SK-N-SH (cell line): ENCODE measurements at regions of chr1 and their contacts with region 1.

Region 1: GRCh38 chr1:234610348-234611152 is 572 bp upstream of the IRF2BP2 start:
- DNase-seq: peak; percentile 92
- H3K4me3 ChIP-seq: peak overlapping the region; percentile 69 to 83
- H3K27ac ChIP-seq: peak overlapping the region; percentile 100
- H3K4me1 ChIP-seq: peaks cover 34 to 46% of the 10 kb centered on the region in 2 experiments
- H3K27me3 ChIP-seq: no peaks in the 10 kb centered on the region
- CTCF ChIP-seq: no peak
- EP300 ChIP-seq: peak in 1 of 2 experiments; percentile 52; a peak in 2 of 4 replicates
- RAD21 ChIP-seq: no peak

Region 2: DNA sequence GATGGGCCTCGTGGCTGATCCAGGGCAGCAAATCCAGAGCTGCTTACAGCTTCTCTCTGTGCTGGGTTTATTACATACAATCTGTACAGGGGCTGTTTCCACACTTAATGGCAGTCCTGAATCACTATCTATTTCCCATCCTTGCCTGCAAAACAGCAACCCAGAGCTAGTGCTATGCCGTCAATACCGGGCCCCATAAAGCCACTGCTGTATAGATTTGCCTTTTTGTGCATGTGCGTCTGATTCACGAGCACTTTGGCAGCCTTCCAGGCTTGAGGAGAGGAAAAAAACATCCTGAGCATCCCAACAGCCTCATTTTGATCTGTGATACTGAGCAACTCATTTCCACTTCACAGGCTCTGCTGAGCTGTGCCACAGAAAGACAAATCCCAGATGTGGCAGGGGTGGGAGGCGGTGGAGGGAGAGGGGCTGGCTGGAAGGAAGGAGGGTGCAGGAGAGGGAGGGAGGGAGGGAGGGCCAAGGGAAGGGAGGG is 66.4 kb before region 1 on chr1:
- CTCF ChIA-PET with region 1: interaction called, 22 read pairs
- POLR2A ChIA-PET with region 1: interaction called, 30 read pairs
- DNase-seq: peak; percentile 86
- H3K4me3 ChIP-seq: no peak overlapping the region; a peak in 1 of 4 replicates
- H3K27ac ChIP-seq: peak overlapping the region; percentile 92 to 100
- H3K4me1 ChIP-seq: peaks cover 23 to 67% of the 10 kb centered on the region in 2 experiments
- H3K27me3 ChIP-seq: no peaks in the 10 kb centered on the region
- CTCF ChIP-seq: no peak
- EP300 ChIP-seq: peak; percentile 88 to 94
- RAD21 ChIP-seq: peak; percentile 30; the same call in 1 of the 2 replicates

Region 3: GRCh38 chr1:234656856-234657654 is 46.5 kb after region 1 on chr1:
- CTCF ChIA-PET with region 1: interaction called, 3 read pairs
- POLR2A ChIA-PET with region 1: interaction called, 13 read pairs
- DNase-seq: peak; percentile 39
- H3K4me3 ChIP-seq: no peak overlapping the region
- H3K27ac ChIP-seq: peak overlapping the region in 1 of 2 experiments; percentile 79; a peak in 3 of 4 replicates
- H3K4me1 ChIP-seq: peaks cover 27 to 35% of the 10 kb centered on the region in 2 experiments
- H3K27me3 ChIP-seq: no peaks in the 10 kb centered on the region
- CTCF ChIP-seq: no peak
- EP300 ChIP-seq: peak; percentile 4 to 85; a peak in 2 of 4 replicates
- RAD21 ChIP-seq: no peak

Region 4: DNA sequence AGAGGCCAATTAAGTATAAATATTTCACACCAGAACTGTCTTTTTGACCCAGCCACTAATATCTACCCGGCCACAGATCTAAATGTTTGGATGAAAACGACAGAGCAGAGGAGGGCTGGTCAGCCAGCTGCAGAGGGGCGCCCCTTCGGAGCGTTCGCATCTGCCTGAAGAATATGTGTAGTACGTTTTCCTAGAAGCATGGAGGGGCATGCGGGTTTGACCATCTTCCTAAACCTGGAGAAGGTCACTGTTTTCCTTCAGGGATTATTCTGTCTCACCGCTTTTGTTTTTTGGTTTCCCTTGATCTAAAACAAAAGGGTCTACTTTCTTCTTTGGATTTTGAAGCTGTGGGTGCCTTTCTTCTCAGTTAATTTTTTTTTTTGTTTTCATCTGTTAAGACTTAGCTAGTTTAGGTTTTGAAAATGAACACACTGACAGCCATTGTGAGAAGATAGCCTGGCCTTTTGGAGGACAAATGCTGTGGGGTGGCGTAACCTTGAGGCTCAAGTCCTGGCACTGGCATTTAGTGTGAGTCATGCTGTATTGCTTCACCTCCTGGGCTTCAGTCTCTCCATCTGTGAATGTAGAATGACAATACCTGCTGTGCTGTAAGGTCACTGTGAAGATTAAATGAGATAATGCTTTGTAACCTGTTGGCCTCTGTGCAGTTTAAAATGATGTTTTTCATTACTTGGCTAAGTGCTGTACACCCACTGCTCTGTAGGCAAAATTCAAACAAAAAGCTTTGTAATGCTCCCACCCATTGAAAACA is 73.5 kb after region 1 on chr1:
- CTCF ChIA-PET with region 1: no interaction called
- POLR2A ChIA-PET with region 1: no interaction called
- DNase-seq: no peak
- H3K4me3 ChIP-seq: no peak overlapping the region
- H3K27ac ChIP-seq: no peak overlapping the region
- H3K4me1 ChIP-seq: no peaks in the 10 kb centered on the region
- H3K27me3 ChIP-seq: no peaks in the 10 kb centered on the region
- CTCF ChIP-seq: no peak
- EP300 ChIP-seq: no peak
- RAD21 ChIP-seq: no peak

Region 5: DNA sequence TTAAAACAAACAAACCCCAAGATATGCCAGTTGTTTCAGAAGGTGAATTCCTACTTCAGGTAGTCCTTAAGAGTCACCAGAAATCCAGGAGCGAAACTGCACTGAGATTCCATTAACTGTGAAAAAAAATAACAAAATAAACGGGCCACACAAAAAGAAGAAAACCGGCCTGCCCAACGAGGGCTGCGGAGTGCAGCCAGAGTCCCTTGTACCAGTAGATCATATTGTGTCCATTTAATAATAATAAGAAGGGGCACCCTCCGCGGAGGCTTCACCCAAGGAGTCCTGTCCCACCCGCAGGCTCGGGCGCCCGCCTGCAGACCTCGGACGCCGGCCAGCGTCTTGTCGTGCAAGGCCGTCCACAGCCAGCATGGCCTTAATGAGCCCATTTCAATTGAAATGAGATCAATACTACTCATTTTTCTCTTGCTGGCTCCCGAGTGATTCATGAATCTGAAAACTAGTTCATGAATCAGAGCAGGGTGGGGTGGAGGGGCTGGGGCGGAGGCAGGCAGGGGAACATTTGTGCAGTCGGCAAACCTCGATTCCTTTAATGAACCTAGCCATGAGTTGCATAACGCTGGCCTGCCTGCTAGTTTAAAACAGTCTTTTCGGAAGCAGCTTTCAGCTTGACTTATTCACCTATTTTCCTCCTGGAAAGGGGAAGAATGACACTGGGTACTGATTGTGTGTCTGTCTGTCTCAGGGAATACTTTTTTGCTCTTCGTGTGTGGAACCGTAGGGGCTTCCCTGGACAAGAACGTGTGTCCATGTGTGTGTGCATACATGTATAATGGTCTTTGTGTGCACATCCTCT is 112.6 kb after region 1 on chr1:
- CTCF ChIA-PET with region 1: interaction called, 14 read pairs
- POLR2A ChIA-PET with region 1: interaction called, 108 read pairs
- DNase-seq: peak; percentile 56
- H3K4me3 ChIP-seq: peak overlapping the region; percentile 3 to 49
- H3K27ac ChIP-seq: peak overlapping the region; percentile 99 to 100
- H3K4me1 ChIP-seq: peaks cover 61 to 74% of the 10 kb centered on the region in 2 experiments
- H3K27me3 ChIP-seq: no peaks in the 10 kb centered on the region
- CTCF ChIP-seq: no peak
- EP300 ChIP-seq: no peak
- RAD21 ChIP-seq: no peak

Region 6: DNA sequence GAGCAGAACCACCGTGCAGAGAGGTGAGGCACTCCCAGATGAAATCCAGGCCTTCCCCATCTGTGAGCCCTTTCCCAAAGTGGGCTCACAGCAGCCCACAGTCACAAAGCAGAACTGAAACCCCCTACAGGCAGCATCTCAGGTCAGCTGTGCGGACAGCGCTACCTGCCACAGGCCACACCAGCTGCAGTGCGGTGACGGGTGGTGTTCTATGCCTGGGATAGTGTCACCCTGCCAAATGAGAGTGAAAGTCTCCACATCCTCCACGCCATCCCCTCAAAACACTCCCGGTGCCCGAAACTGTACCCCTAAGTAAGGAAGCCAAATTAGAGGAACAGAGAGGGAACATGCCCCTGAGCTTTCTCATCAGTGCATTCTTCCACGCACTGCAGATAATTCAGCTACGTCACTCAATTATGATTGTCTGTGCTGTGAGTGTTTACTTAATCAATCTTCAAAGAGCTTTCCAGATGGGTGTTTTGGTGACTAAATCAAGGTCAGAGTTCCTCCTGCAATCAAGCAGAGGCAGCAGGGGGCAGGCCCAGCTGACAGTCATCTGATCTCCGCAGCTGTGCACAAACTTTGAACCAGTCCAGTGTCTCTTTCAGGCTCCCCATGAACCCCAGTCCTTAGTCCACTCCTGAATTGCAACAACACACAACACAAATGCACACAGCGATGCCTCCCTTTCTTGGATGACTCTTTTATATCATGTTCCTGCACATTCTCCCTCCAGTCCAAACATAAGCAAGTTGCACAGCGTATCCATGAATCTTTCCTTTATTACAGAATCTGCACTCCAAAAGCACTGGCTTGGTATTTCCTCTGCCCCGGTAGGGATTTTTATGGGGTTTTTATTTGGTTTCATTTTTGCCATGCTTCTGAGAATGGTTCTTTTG is 368.1 kb after region 1 on chr1:
- CTCF ChIA-PET with region 1: interaction called, 12 read pairs
- POLR2A ChIA-PET with region 1: interaction called, 5 read pairs
- DNase-seq: peak; percentile 60
- H3K4me3 ChIP-seq: no peak overlapping the region
- H3K27ac ChIP-seq: peak overlapping the region; percentile 87 to 98
- H3K4me1 ChIP-seq: peaks cover 45 to 58% of the 10 kb centered on the region in 2 experiments
- H3K27me3 ChIP-seq: no peaks in the 10 kb centered on the region
- CTCF ChIP-seq: no peak
- EP300 ChIP-seq: peak in 1 of 2 experiments; percentile 29; a peak in 1 of 4 replicates
- RAD21 ChIP-seq: peak; percentile 43